ENCODE measurements at regions of chr15 and their contacts with region 1.

Region 1: DNA sequence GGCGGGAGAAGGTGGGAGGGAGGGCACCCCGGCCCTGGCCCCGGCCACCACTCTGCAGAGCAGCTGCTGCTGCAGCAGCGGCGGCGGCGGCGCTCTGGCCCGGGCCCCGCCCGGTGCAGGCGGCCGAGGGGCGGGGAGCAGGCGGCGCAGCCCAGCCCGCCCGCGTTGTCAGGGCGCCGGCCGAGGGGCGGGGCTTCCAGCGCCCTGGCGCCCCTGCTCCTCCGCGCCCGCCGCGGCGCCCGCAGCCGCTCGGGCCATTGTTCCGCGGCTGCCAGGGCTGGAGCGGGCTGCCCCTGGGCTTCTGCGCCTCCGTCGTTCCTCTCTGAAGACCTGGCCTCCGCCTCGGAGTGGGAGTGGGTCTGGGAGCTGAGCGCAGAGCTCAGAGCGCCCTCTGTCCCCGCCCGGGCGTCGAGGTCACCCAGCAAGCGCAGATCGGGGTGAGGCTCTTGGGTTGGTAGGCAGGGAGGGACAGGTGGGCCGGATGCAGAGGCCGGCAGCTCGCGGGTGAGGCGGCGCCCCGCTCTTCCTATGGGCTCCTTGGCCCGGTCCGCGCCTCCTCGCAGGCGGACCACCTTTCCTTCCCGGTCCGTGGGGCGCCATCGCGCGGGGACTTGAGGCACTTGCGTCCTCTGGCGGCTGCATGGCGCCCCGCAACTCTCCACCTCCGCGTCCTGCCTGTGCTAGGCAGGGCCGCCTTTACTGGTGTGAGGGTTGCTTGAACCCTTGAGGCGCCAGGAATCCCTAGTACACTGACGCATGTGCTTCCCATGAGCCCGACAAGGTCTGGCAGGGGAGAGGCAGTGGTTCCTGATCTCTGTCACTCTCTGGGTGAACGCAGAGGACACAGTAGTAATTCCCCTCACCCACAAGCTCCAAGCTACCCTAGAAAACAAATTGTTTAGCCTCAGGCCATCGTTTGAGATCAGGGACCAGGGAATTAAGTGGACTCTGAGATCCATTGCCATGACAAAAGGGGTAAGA is at the start of gene LPCAT4:
- DNase-seq: peak; percentile 78 to 98 (median 88)

Region 2: GRCh38 chr15:33975022-33975565 is 392.3 kb before region 1 on chr15:
- intact Hi-C with region 1: no loop called
- DNase-seq: no peak

Region 3: DNA sequence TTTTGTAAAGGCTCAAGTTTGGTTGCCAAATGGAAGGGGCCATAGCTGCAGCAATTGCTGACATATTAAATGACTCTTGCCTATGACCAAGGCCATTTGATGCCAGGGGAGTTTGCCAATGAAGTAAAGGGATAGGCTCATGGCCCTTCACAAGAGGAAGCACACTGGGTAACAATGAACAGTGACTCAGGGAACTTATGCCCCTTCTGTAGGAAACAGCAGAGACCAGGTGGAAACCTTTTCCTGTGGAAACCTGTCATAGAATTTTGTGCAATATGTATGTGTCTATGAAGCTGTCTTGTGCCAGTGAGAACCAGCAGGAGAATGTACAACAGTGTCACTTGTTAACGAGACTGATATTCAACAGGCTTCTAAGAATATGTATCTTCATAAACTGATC is 303.0 kb before region 1 on chr15:
- intact Hi-C with region 1: loop called (anchors 5 kb)
- DNase-seq: no peak

Region 4: DNA sequence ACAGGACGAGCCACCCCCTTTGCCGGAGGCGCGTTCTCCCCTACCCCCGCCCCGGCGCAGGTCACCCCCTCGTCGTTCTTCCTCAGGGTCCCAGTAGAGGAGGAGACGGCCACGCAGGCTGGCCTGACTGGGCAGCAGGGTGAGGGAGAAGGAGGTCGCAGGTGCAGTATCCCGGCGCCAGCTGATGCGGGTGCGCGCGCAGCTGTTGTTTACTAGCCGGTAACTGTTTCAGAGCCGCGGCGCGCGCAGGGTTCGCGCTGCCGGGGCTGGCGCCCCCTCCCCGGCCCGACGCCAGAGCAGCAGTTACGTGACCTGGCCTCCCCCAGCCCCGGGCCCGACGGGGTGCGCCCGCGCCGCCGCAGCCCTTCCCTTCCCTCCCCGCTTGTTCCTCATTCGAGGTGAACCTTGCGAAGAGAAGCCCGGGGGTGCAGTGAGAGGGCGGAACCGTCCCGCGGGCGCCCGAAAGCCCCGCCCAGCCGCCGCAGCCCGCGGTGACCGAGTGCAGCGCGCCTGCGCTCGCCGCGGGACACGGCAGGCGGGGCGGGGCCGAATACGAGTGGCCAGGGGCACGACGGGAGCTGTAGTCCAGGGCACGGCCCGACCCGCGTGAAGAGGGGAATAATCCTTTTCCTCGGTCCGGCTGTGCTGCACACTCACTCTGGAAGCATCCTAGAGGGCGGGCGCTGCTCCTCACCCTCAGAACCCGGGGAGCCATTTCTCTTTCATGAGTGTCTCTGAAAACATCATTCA is 29.7 kb before region 1 on chr15 and contains the start of gene SLC12A6:
- intact Hi-C with region 1: loop called (anchors 1 kb)
- DNase-seq: peak; percentile 80 to 99 (median 90)

Region 5: GRCh38 chr15:34342737-34343575 is 24.4 kb before region 1 on chr15 and contains the starts of genes NOP10 and NUTM1:
- intact Hi-C with region 1: loop called (anchors 1 kb)
- DNase-seq: peak; percentile 85 to 98 (median 93)

Region 6: GRCh38 chr15:34749691-34750090 is 382.3 kb after region 1 on chr15:
- intact Hi-C with region 1: no loop called
- DNase-seq: no peak